Right cardiac atrium (tissue), 5 donors: ENCODE measurements at regions of chr9 and their contacts with region 1.

Region 1: GRCh38 chr9:119289740-119290433 is 79.3 kb downstream of the BRINP1 start:
- DNase-seq: peak in 1 of 3 donors; percentile 38
- ATAC-seq: peak; percentile 55 to 64
- H3K4me3 ChIP-seq: no peak overlapping the region
- H3K27ac ChIP-seq: no peak overlapping the region
- H3K4me1 ChIP-seq: no peaks in the 10 kb centered on the region
- H3K27me3 ChIP-seq: no peaks in the 10 kb centered on the region

Region 2: GRCh38 chr9:118829334-118829733 is 460.6 kb before region 1 on chr9:
- intact Hi-C with region 1: loop called (anchors 5 to 10 kb)
- DNase-seq: no peak
- ATAC-seq: peak in 1 of 2 donors; percentile 33
- H3K4me3 ChIP-seq: no peak overlapping the region
- H3K27ac ChIP-seq: no peak overlapping the region
- H3K4me1 ChIP-seq: no peaks in the 10 kb centered on the region
- H3K27me3 ChIP-seq: no peaks in the 10 kb centered on the region

Region 3: GRCh38 chr9:118836891-118837290 is 453.0 kb before region 1 on chr9:
- intact Hi-C with region 1: loop called in 2 of 4 experiments (anchors 5 to 10 kb)
- DNase-seq: peak in 1 of 3 donors; percentile 47
- ATAC-seq: peak in 1 of 2 donors; percentile 77
- H3K4me3 ChIP-seq: no peak overlapping the region
- H3K27ac ChIP-seq: no peak overlapping the region
- H3K4me1 ChIP-seq: no peaks in the 10 kb centered on the region
- H3K27me3 ChIP-seq: no peaks in the 10 kb centered on the region

Region 4: DNA sequence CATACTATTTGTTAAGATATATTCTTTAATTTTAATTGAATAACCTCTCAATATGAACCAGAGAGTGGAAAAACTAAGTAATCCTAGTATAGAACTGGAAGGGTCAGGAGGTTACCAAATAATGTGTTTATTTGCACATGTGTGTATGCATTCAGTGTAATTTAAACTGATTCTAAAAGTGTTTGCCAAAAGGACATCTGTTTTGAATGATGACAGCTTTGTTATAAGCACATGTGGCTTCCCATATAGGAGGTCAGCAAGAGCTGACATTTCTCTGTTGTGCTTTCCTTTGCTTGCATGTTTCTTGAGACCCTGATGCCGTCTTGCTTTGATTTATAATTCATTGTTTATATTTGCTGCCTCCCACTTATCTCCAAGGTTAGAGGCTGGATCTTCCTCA is 304.0 kb before region 1 on chr9:
- intact Hi-C with region 1: loop called in 1 of 4 experiments (anchors 5 kb)
- DNase-seq: no peak
- ATAC-seq: no peak
- H3K4me3 ChIP-seq: no peak overlapping the region
- H3K27ac ChIP-seq: no peak overlapping the region
- H3K4me1 ChIP-seq: no peaks in the 10 kb centered on the region
- H3K27me3 ChIP-seq: no peaks in the 10 kb centered on the region